ENCODE measurements at regions of chr11 and their contacts with region 1.

Region 1: GRCh38 chr11:117178210-117179034 is at the start of gene SIDT2:
- DNase-seq: peak; percentile 84 to 94
- ATAC-seq: peak; percentile 92 to 97 (median 93)
- H3K4me3 ChIP-seq: peak within 1 kb of the TSS; percentile 72
- H3K4me3 Mint-ChIP-seq: peak within 1 kb of the TSS; percentile 95
- H3K27ac ChIP-seq: peak within 1 kb of the TSS; percentile 83
- H3K27ac Mint-ChIP-seq: peak within 1 kb of the TSS; percentile 86 to 92
- H3K4me1 ChIP-seq: peaks cover 34% of the 10 kb centered on the region
- H3K4me1 Mint-ChIP-seq: peaks cover 31 to 34% of the 10 kb centered on the region in 2 donors
- H3K27me3 ChIP-seq: no peaks in the 10 kb centered on the region
- H3K27me3 Mint-ChIP-seq: no peaks in the 10 kb centered on the region
- CTCF ChIP-seq: peak; percentile 13
- total RNA-seq, gene SIDT2: 80.0 to 111 (median 82.0) TPM

Region 2: GRCh38 chr11:117143871-117144476 is 34.4 kb before region 1 on chr11 and contains the start of gene PAFAH1B2:
- intact Hi-C with region 1: loop called (anchors 2 kb)
- DNase-seq: peak; percentile 90 to 97
- ATAC-seq: peak; percentile 87 to 96 (median 93)
- H3K4me3 ChIP-seq: peak within 1 kb of the TSS; percentile 74
- H3K4me3 Mint-ChIP-seq: peak within 1 kb of the TSS; percentile 100
- H3K27ac ChIP-seq: peak within 1 kb of the TSS; percentile 74
- H3K27ac Mint-ChIP-seq: peak within 1 kb of the TSS; percentile 89 to 93
- H3K4me1 ChIP-seq: peaks cover 24% of the 10 kb centered on the region
- H3K4me1 Mint-ChIP-seq: peaks cover 32 to 36% of the 10 kb centered on the region in 2 donors
- H3K27me3 ChIP-seq: no peaks in the 10 kb centered on the region
- H3K27me3 Mint-ChIP-seq: peaks cover 12 to 30% of the 10 kb centered on the region in 2 donors
- CTCF ChIP-seq: no peak
- total RNA-seq, gene PAFAH1B2: 46.1 to 71.0 (median 58.8) TPM

Region 3: GRCh38 chr11:117226388-117227385 is 48.3 kb after region 1 on chr11:
- intact Hi-C with region 1: loop called (anchors 1 kb)
- DNase-seq: peak in 1 of 2 donors; percentile 88
- ATAC-seq: peak; percentile 68 to 79 (median 68)
- H3K4me3 ChIP-seq: no peak overlapping the region
- H3K4me3 Mint-ChIP-seq: peak overlapping the region; percentile 4
- H3K27ac ChIP-seq: no peak overlapping the region
- H3K27ac Mint-ChIP-seq: peak overlapping the region; percentile 64 to 75
- H3K4me1 ChIP-seq: peaks cover 33% of the 10 kb centered on the region
- H3K4me1 Mint-ChIP-seq: peaks cover 35 to 52% of the 10 kb centered on the region in 2 donors
- H3K27me3 ChIP-seq: no peaks in the 10 kb centered on the region
- H3K27me3 Mint-ChIP-seq: no peaks in the 10 kb centered on the region
- CTCF ChIP-seq: peak; percentile 73

Measured in natural killer cell (primary cell).